GM12878 (cell line): ENCODE measurements at regions of chr12 and their contacts with region 1.

Region 1: DNA sequence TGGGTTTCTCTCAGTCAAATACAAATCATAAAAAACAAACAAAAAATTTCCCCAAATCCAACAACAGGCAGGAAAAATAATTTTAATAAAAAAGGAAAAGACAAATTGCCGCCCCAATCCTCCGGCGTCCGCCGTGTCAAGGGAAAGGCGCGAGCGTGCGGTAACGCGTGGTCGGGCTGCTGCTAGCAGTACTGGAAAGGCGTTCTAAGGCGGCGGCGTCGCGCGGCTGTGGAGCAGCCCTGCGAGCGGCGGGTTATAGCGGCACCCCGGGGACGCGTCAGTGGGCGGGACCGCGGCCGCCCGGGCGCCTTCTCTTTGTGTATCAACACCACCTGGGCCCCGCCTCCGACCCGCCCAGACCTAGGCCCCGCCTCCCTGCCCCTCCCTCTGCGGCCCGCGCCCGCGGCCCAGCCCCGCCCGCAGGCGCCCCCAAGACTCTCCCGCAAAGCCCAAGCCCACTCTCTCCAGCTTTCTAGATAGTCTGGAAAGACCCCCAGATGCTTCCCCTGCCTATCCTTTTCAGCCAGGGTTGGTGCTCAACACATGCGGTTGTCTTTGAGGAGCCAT is at the start of gene SLC38A2:
- DNase-seq: no peak
- ATAC-seq: peak; percentile 90
- H3K4me3 ChIP-seq: peak within 1 kb of the TSS; percentile 84
- H3K27ac ChIP-seq: peak within 1 kb of the TSS; percentile 85
- H3K4me1 ChIP-seq: peaks cover 10% of the 10 kb centered on the region
- H3K27me3 ChIP-seq: no peaks in the 10 kb centered on the region
- CTCF ChIP-seq: no peak
- EP300 ChIP-seq: no peak
- POLR2A ChIP-seq: peak; percentile 99
- RAD21 ChIP-seq: no peak
- polyA plus RNA-seq, gene SLC38A2: 36.2 to 47.3 TPM

Region 2: GRCh38 chr12:46174061-46174662 is 198.5 kb before region 1 on chr12:
- CTCF ChIA-PET with region 1: no interaction called
- POLR2A ChIA-PET with region 1: interaction called, 3 read pairs
- RAD21 ChIA-PET with region 1: no interaction called
- SMC1A ChIA-PET with region 1: no interaction called
- in situ Hi-C with region 1: no loop called
- intact Hi-C with region 1: loop called (anchors 5 kb)
- DNase-seq: peak; percentile 85
- ATAC-seq: peak; percentile 57
- H3K4me3 ChIP-seq: no peak overlapping the region; the same call in 1 of the 2 replicates
- H3K27ac ChIP-seq: peak overlapping the region; percentile 21
- H3K4me1 ChIP-seq: peaks cover 25% of the 10 kb centered on the region
- H3K27me3 ChIP-seq: no peaks in the 10 kb centered on the region
- CTCF ChIP-seq: no peak
- EP300 ChIP-seq: peak in 1 of 2 experiments; percentile 76; a peak in 2 of 4 replicates
- POLR2A ChIP-seq: no peak
- RAD21 ChIP-seq: no peak

Region 3: DNA sequence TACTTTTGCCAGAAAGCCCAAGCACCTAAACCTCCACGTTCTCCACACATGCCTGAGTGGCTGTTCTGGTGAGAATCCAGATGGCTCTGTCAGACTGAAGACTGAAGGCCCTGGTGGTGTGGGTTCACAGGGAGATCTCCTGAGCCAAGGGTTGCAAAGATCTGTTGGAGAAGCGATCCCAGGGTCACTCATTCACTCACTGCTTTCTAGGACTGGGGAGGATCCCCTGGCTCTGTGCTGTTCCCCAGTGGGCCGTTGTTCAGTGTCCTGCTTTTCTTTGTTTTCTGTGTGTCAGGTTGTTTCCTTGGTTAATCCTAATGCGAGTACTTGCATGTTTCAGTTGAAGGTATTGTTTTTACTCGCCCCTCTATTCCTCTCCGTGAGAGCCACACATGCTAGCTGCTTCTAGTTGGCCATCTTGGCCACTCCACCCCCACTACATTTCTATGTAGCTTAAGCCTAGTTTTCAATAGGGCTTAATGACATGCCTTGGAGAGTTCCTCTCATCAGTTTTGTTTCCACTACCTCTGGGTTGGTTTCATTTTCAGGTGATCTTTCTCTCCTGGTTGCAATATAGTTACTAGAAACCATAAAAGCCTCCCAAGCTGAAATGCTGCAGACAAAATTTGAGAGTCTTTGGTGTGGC is 144.4 kb after region 1 on chr12:
- CTCF ChIA-PET with region 1: interaction called, 4 read pairs
- POLR2A ChIA-PET with region 1: interaction called, 3 read pairs
- RAD21 ChIA-PET with region 1: no interaction called
- SMC1A ChIA-PET with region 1: interaction called, 5 read pairs
- in situ Hi-C with region 1: no loop called
- intact Hi-C with region 1: loop called (anchors 5 kb)
- DNase-seq: peak; percentile 85
- ATAC-seq: peak; percentile 96
- H3K4me3 ChIP-seq: peak overlapping the region; percentile 18; the same call in 1 of the 2 replicates
- H3K27ac ChIP-seq: peak overlapping the region; percentile 97
- H3K4me1 ChIP-seq: peaks cover 30% of the 10 kb centered on the region
- H3K27me3 ChIP-seq: no peaks in the 10 kb centered on the region
- CTCF ChIP-seq: no peak
- EP300 ChIP-seq: peak in 1 of 2 experiments; percentile 48; a peak in 1 of 4 replicates
- POLR2A ChIP-seq: no peak
- RAD21 ChIP-seq: peak; percentile 24